K562 (cell line): ENCODE measurements at regions of chr12 and their contacts with region 1.

Region 1: GRCh38 chr12:102439426-102440405 is 40.6 kb downstream of the IGF1 start:
- DNase-seq: no peak
- ATAC-seq: no peak
- H3K4me3 ChIP-seq: no peak overlapping the region
- H3K27ac ChIP-seq: peak overlapping the region; percentile 67; the same call in 1 of the 3 replicates
- H3K4me1 ChIP-seq: peaks cover 0 to 60% of the 10 kb centered on the region in 2 experiments; a peak in 4 of 5 replicates
- H3K27me3 ChIP-seq: no peaks in the 10 kb centered on the region
- CTCF ChIP-seq: no peak
- EP300 ChIP-seq: no peak
- POLR2A ChIP-seq: no peak
- RAD21 ChIP-seq: no peak

Region 2: GRCh38 chr12:102479099-102479887 is 39.6 kb after region 1 on chr12:
- CTCF ChIA-PET with region 1: no interaction called
- POLR2A ChIA-PET with region 1: no interaction called
- in situ Hi-C with region 1: no loop called
- intact Hi-C with region 1: loop called (anchors 2 kb)
- DNase-seq: peak in 1 of 4 experiments; percentile 37
- ATAC-seq: peak; percentile 12
- H3K4me3 ChIP-seq: peak overlapping the region; percentile 23
- H3K27ac ChIP-seq: peak overlapping the region; percentile 41; the same call in 1 of the 3 replicates
- H3K4me1 ChIP-seq: peaks cover 4 to 31% of the 10 kb centered on the region in 2 experiments; a peak in 4 of 5 replicates
- H3K27me3 ChIP-seq: no peaks in the 10 kb centered on the region
- CTCF ChIP-seq: no peak
- EP300 ChIP-seq: no peak
- POLR2A ChIP-seq: no peak
- RAD21 ChIP-seq: no peak